GM12878 (cell line): ENCODE measurements at regions of chr19 and their contacts with region 1.

Region 1: DNA sequence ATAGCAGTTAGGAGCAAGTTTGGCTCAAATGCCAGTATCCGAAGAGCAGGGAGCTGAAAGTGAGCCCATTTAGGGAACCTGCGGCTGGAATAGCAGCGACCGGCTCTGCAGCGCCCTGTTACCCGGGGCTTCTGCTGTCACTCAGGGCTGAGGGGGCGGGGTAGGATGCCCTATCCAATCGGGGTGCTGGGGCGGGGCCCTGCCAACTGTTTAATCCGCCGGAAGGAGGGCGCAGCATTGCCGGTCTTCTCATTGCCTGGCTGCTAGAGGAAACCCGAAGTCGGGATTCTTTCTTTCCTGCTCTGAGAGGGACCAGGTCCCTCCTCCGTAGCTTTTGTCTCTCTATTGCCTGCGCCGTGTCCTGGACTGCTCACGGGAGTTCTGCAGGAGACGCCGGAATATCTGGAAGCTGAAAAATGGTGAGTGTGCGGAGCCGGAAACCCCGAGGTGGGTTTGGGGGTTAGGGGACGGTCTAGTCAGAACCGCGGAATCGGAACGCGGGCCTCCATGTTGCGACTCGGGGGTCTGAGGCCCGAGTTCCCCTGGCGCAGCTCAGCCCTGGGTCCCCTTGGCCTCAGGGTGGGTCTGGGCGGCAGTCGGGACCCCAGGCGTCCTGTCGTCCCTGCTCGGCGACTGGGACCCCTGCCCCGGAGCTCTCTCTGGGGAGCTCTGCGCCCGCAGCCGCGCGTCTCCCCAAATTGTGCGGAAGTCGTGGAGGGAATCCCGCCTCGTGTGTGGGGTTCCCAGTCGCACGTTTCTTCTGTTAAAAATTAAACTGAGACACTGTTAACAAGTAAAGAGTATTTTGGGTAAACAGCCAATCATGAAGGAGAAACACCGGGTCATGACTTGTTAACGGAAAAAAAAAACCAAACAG is 22.8 kb downstream of the ZNF763 start:
- DNase-seq: peak; percentile 68
- ATAC-seq: peak; percentile 99
- H3K4me3 ChIP-seq: peak overlapping the region; percentile 96
- H3K27ac ChIP-seq: peak overlapping the region; percentile 82
- H3K4me1 ChIP-seq: no peaks in the 10 kb centered on the region
- H3K27me3 ChIP-seq: no peaks in the 10 kb centered on the region
- CTCF ChIP-seq: no peak
- EP300 ChIP-seq: 0 out of 4 replicates have a peak, but pooled peaks of 1 of the 2 experiments have one; percentile 8
- POLR2A ChIP-seq: peak; percentile 81
- RAD21 ChIP-seq: no peak

Region 2: DNA sequence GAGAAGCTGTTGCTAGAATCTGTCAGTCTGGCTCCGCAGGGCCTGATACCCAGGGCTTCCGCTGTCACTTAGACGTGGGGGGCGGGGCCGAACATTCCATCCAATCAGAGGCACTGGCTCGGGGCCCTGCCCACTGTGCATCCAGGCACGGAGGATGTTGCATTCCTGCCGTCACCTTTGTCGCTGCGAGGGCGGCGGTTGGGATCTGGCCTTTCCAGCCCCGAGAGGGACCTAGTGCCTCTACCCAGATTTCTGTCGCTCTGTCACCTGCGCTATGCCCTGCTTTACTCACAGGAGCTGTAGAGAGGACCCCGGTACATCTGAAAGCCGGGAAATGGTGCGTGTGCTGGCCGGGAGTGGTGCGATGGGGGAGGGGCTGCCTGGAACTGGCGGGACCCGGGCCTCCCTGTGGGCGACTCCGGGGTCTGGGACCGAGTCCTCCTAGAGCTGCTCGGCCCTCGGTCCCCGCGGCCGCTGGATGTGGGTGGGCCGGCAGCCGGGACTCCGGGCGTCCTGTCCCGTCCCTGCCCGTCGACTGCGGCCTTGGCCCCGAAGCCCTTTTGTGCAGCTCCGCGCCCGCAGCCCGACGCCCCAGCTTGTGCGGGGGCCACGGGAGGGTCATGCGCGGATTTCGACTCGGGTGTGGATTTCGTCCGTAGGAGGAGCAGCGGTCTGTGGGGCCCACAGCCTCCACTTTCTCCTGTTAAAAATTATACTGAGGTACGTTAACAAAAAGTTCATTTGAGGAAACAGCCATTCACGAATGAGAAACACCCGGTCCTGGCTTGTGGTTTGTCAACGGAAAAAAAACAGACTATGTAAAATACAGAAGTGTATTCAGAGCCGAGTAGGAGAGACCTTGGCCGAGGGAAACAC is 138.8 kb before region 1 on chr19 and contains the start of gene ZNF439:
- CTCF ChIA-PET with region 1: no interaction called
- POLR2A ChIA-PET with region 1: no interaction called
- RAD21 ChIA-PET with region 1: no interaction called
- SMC1A ChIA-PET with region 1: no interaction called
- in situ Hi-C with region 1: no loop called
- intact Hi-C with region 1: no loop called
- DNase-seq: peak; percentile 52
- ATAC-seq: peak; percentile 53; the same call in 2 of the 3 replicates
- H3K4me3 ChIP-seq: peak within 1 kb of the TSS; percentile 54
- H3K27ac ChIP-seq: no peak within 1 kb of the TSS
- H3K4me1 ChIP-seq: 0 out of 2 replicates have a peak, but pooled peaks cover 3% of the 10 kb centered on the region
- H3K27me3 ChIP-seq: no peaks in the 10 kb centered on the region
- CTCF ChIP-seq: no peak
- EP300 ChIP-seq: no peak
- POLR2A ChIP-seq: peak; percentile 76
- RAD21 ChIP-seq: no peak
- polyA plus RNA-seq, gene ZNF439: 0.43 to 0.77 TPM

Region 3: DNA sequence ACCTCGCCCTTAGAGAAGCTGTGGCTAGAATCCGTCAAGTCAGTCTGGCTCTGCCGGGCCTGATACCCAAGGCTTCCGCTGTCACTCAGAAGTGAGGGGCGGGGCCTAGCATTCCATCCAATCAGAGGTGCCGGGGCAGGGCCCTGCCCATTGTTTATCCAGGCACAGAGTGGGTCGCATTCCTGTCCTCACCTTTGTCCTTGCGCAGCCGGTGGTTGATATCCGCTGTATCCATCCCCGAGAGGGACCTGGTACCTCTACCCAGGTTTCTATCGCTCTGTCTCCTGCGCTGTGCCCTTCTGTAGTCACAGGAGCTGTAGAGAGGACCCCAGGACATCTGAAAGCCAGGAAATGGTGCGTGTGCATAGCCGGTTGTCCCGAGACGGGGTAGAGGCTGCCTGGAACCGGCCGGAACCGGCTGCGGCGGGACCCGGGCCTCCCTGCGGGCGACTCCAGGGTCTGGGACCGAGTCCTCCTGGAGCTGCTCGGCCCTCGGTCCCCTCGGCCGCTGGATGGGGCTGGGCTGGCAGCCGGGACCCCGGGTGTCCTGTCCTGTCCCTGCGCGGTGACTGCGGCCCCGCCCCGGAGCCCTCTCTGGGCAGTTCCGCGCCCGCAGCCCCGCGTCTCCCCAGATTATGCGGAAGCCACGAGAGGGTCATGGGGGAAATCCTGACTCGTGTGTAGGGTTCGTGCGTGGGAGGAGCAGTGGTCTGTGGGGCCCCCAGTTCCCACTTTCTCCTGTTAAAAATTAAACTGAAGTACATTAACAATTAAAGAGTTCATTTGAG is 22.6 kb before region 1 on chr19 and contains the start of gene ZNF763:
- CTCF ChIA-PET with region 1: interaction called, 83 read pairs
- POLR2A ChIA-PET with region 1: interaction called, 10 read pairs
- RAD21 ChIA-PET with region 1: interaction called, 31 read pairs
- SMC1A ChIA-PET with region 1: interaction called, 54 read pairs
- in situ Hi-C with region 1: no loop called
- intact Hi-C with region 1: loop called (anchors 1 kb)
- DNase-seq: peak; percentile 79
- ATAC-seq: peak; percentile 97
- H3K4me3 ChIP-seq: peak within 1 kb of the TSS; percentile 70
- H3K27ac ChIP-seq: peak within 1 kb of the TSS; percentile 94
- H3K4me1 ChIP-seq: peaks cover 7% of the 10 kb centered on the region
- H3K27me3 ChIP-seq: no peaks in the 10 kb centered on the region
- CTCF ChIP-seq: no peak
- EP300 ChIP-seq: peak; percentile 48 to 63; a peak in 2 of 4 replicates
- POLR2A ChIP-seq: peak; percentile 82
- RAD21 ChIP-seq: no peak
- polyA plus RNA-seq, gene ZNF763: 0.86 to 0.89 TPM

Region 4: DNA sequence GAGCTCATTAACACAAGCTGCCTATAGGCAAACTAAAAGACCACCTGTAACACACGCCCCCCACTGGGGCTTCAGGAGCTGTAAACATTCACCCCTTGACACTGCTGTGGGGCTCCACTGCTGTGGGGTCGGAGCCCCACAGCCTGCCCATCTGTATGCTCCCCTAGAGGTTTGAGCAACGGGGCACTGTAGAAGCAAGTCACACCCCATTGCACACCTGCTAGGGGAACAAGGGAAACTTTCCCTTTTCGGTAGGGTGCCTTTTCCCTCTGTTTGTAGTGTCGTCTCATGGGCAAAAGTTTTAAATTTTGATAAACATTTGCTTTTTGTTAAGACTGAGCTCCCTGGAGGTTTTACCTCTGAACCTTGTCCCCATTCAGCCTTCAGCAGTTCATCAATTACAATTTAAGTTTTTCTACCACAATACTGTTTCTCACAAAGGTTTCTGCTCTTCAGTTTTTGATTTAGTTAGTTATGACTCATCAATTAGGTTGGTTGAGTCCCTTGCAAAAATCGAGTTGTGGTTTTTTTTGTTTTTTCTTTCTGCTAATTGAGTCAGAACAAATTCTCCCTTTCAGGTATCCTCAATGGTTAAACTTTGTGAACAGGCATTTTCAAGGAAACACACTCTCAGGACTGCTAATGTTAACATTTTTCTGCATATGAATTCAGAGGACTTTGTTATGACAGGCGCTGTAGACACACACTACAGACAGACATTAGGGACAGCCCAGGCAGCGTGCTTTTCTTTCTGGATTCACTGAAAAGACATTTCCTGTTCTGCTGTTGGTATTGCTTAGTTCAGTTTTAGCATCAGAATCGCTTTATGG is 12.7 kb after region 1 on chr19:
- CTCF ChIA-PET with region 1: interaction called, 27 read pairs
- POLR2A ChIA-PET with region 1: interaction called, 10 read pairs
- RAD21 ChIA-PET with region 1: interaction called, 13 read pairs
- SMC1A ChIA-PET with region 1: interaction called, 28 read pairs
- in situ Hi-C with region 1: no loop called
- intact Hi-C with region 1: no loop called
- DNase-seq: peak; percentile 85
- ATAC-seq: peak; percentile 91
- H3K4me3 ChIP-seq: peak overlapping the region; percentile 42; the same call in 1 of the 2 replicates
- H3K27ac ChIP-seq: peak overlapping the region; percentile 66
- H3K4me1 ChIP-seq: peaks cover 16% of the 10 kb centered on the region
- H3K27me3 ChIP-seq: no peaks in the 10 kb centered on the region
- CTCF ChIP-seq: no peak
- EP300 ChIP-seq: peak; percentile 65 to 88; a peak in 2 of 4 replicates
- POLR2A ChIP-seq: no peak
- RAD21 ChIP-seq: no peak

Region 5: DNA sequence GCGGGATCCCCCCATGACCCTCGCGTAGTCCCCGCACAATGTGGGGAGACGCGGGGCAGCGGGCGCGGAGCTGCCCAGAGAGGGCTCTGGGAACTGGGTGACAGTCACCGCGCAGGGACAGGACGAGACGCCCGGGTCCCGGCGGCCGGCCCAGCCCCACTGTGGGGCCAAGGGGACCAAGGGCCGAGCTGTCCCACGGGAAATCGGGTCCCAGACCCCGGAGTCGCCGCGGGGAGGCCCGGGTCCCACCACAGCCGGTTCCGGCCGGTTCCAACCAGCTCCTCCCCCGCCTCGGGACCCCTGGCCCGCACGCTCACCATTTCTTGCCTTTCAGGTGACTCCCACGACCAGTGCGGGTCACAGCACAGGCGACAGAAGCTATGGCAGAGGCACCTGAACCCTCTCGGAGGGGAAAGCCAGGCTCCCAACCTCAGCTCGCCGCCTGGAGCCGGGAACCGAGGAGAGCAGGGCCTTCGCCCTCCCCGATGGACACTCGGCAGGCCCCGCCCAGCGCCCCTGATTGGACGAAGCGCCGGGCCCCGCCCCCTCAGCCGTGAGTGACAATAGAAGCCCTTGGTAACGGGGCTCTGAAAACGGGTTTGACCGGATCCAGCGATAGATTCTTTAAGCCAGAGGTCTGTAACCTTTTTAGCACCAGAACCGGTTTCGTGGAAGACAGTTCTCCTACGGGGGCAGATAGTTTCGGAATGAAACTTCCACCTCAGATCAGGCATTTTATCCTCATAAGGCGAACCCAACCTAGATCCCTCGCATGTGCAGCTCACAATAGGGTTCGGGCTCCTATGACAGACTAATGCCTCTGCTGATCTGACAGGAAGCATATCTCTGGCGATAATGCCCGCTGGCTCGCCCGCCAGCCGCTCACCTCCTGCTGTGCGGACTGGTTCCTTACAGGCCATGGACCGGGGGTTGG is 47.8 kb after region 1 on chr19 and contains the start of gene ZNF433:
- CTCF ChIA-PET with region 1: interaction called, 14 read pairs
- POLR2A ChIA-PET with region 1: interaction called, 4 read pairs
- RAD21 ChIA-PET with region 1: no interaction called
- SMC1A ChIA-PET with region 1: interaction called, 3 read pairs
- in situ Hi-C with region 1: no loop called
- intact Hi-C with region 1: no loop called
- DNase-seq: no peak
- ATAC-seq: peak; percentile 95
- H3K4me3 ChIP-seq: peak within 1 kb of the TSS; percentile 78
- H3K27ac ChIP-seq: peak within 1 kb of the TSS; percentile 82
- H3K4me1 ChIP-seq: no peaks in the 10 kb centered on the region
- H3K27me3 ChIP-seq: no peaks in the 10 kb centered on the region
- CTCF ChIP-seq: no peak
- EP300 ChIP-seq: no peak
- POLR2A ChIP-seq: peak; percentile 91
- RAD21 ChIP-seq: no peak
- polyA plus RNA-seq, gene ZNF433: 1.7 to 1.8 TPM

Region 6: DNA sequence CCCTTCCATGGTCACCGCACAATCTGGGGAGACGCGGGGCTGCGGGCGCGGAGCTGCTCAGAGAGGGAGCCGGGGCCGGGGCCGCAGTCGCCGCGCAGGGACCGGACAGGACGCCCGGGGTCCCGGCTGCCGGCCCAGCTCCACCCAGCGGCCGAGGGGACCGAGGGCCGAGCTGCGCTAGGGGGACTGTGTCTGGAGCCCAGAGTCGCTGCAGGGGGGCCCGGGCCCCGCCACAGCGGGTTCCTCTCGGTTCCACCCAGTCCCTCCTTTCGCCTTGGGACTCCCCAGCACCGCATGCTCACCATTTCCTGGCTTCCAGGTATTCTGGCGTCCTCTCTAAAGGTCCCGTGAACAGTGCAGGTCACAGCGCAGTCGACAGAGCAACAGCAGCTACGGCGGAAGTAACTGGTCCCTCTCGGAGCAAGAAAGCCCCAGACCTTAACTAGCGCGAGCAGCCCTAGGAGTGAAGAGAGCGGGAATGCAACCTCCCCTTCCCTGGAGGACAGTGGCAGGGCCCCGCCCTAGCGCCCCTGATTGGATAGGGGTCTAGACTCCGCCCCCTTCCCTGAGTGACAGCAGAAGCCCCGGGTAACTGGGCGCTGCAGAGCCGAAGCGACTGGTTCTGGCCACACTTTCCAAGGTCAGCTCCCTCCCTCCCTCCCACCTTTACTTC is 65.0 kb after region 1 on chr19 and contains the start of gene ZNF878:
- CTCF ChIA-PET with region 1: interaction called, 44 read pairs
- POLR2A ChIA-PET with region 1: interaction called, 5 read pairs
- RAD21 ChIA-PET with region 1: interaction called, 22 read pairs
- SMC1A ChIA-PET with region 1: interaction called, 7 read pairs
- in situ Hi-C with region 1: no loop called
- intact Hi-C with region 1: loop called (anchors 2 kb)
- DNase-seq: peak; percentile 67
- ATAC-seq: peak; percentile 96
- H3K4me3 ChIP-seq: peak within 1 kb of the TSS; percentile 86
- H3K27ac ChIP-seq: peak within 1 kb of the TSS; percentile 67
- H3K4me1 ChIP-seq: no peaks in the 10 kb centered on the region
- H3K27me3 ChIP-seq: no peaks in the 10 kb centered on the region
- CTCF ChIP-seq: peak; percentile 12 to 26 (median 18); a peak in 3 of 6 replicates
- EP300 ChIP-seq: no peak
- POLR2A ChIP-seq: peak; percentile 92
- RAD21 ChIP-seq: no peak
- polyA plus RNA-seq, gene ZNF878: 0.24 to 0.79 TPM

Region 7: GRCh38 chr19:12064590-12065538 is 77.2 kb after region 1 on chr19 and contains the start of gene ZNF844:
- CTCF ChIA-PET with region 1: interaction called, 14 read pairs
- POLR2A ChIA-PET with region 1: interaction called, 4 read pairs
- RAD21 ChIA-PET with region 1: interaction called, 5 read pairs
- SMC1A ChIA-PET with region 1: no interaction called
- in situ Hi-C with region 1: no loop called
- intact Hi-C with region 1: no loop called
- DNase-seq: peak; percentile 48
- ATAC-seq: peak; percentile 20; the same call in 1 of the 3 replicates
- H3K4me3 ChIP-seq: peak within 1 kb of the TSS; percentile 64
- H3K27ac ChIP-seq: peak within 1 kb of the TSS; percentile 86
- H3K4me1 ChIP-seq: no peaks in the 10 kb centered on the region
- H3K27me3 ChIP-seq: no peaks in the 10 kb centered on the region
- CTCF ChIP-seq: no peak
- EP300 ChIP-seq: no peak
- POLR2A ChIP-seq: peak; percentile 97
- RAD21 ChIP-seq: no peak
- polyA plus RNA-seq, gene ZNF844: 0.16 to 0.26 TPM